ENCODE measurements at regions of chr7 and their contacts with region 1.

Region 1: DNA sequence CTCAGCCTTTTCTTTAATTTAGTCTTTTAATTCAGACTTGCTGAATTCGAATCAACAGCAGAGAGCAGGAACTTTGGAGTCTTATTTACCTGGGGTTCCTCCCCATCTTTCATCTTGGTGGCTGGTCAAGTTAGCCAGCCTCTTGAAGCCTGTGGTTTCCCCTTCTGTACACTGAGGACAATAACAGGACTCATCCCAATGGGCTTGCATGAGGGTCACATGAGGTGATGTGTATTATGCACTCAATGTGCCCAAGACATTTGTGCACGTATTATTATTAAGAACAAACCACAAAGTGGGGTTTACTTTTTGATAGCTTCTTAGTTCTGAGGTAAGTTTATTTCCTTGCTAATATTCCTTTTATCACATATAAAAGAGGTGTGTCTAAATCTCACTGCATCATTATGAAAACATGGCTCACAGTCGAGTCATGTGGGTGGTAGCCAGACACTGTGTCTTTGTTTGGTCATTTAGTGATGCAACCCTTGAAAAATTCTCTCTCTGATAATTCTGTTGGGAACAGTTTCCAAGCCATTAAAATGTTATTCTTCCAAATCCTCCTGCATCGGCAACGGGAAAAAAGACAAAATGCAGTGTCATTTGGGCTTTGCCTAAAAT is 86.5 kb upstream of the GRB10 start:
- DNase-seq: peak; percentile 87
- ATAC-seq: peak; percentile 93
- H3K4me3 ChIP-seq: peak overlapping the region; percentile 27; the same call in 1 of the 2 replicates
- H3K27ac ChIP-seq: peak overlapping the region; percentile 85
- H3K4me1 ChIP-seq: peaks cover 30% of the 10 kb centered on the region
- H3K27me3 ChIP-seq: no peaks in the 10 kb centered on the region
- CTCF ChIP-seq: no peak

Region 2: DNA sequence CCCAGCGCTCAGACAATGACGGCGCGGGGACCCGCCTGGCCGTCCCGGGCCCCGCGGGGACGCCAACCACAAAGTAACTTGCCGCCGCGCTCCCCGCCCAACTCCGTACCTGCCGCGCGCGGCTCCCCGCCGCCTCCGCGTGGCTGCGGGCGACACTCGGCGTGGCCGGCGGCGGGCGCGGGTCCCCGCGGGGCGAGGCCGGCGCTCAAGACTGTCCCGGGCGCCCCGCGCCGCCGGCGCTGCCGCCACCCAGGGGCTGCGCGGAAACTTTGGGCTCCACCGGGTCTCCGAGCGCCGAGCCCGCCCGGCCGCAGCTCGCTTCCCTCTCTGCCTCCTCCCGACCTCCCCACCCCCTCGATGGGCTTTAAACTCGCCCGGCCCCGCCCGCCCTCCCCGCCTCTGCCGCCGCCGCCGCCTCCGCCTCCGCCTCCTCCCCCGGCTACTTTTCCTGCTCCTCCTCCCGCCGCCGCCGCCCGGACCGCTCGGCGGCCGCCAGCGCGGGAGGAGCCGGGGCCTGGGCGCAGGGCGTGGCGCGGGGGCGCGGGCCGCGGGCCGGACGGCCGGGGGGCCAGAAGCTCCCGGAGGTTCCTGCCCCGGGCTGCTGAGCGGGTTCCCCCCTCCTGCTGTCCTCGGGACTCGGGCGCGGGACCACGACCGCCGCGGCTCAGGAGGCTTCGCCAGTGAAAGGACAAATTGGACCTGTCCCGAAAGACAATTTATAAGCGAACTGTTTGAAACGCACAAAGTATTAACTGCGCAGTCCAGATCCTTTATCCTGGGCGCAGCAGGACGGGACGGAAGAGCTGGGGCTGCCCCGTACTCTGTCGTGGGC is 75.9 kb before region 1 on chr7:
- CTCF ChIA-PET with region 1: no interaction called
- POLR2A ChIA-PET with region 1: no interaction called
- intact Hi-C with region 1: loop called (anchors 2 kb)
- DNase-seq: peak; percentile 61
- ATAC-seq: peak; percentile 67
- H3K4me3 ChIP-seq: peak overlapping the region; percentile 65
- H3K27ac ChIP-seq: peak overlapping the region; percentile 36; the same call in 1 of the 2 replicates
- H3K4me1 ChIP-seq: peaks cover 15% of the 10 kb centered on the region
- H3K27me3 ChIP-seq: no peaks in the 10 kb centered on the region
- CTCF ChIP-seq: no peak

Region 3: DNA sequence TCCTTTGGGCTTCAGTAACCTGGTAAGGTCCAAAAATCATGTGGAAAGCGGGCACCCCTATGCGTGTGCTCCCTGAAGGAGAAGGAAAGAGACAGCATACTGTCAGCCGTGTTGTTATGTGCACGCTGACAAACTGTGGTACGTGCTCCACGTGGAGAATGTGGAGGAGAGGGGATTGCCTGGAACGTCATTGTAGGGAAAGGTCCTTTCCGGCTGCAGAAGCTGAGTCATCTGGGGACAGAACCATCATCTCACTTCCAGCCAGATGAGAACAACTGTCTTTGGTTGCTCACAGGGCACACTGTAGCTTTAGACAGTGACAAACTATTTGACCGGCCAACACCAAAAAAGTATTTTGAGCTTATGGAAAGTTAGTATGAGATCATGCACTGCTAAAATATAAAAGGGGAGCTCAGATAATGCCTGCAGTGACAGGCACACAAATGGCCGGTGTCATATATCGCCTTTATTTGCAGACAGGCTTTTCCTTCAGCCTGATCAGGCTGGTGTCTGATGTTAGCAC is 47.7 kb before region 1 on chr7:
- CTCF ChIA-PET with region 1: no interaction called
- POLR2A ChIA-PET with region 1: no interaction called
- intact Hi-C with region 1: no loop called
- DNase-seq: peak; percentile 70
- ATAC-seq: peak; percentile 65
- H3K4me3 ChIP-seq: no peak overlapping the region
- H3K27ac ChIP-seq: peak overlapping the region; percentile 90
- H3K4me1 ChIP-seq: peaks cover 45% of the 10 kb centered on the region
- H3K27me3 ChIP-seq: no peaks in the 10 kb centered on the region
- CTCF ChIP-seq: no peak

Region 4: GRCh38 chr7:50832744-50833143 is 36.5 kb before region 1 on chr7:
- CTCF ChIA-PET with region 1: no interaction called
- POLR2A ChIA-PET with region 1: no interaction called
- intact Hi-C with region 1: loop called (anchors 1 kb)
- DNase-seq: peak; percentile 97
- ATAC-seq: peak; percentile 92
- H3K4me3 ChIP-seq: no peak overlapping the region
- H3K27ac ChIP-seq: peak overlapping the region; percentile 98
- H3K4me1 ChIP-seq: peaks cover 60% of the 10 kb centered on the region
- H3K27me3 ChIP-seq: no peaks in the 10 kb centered on the region
- CTCF ChIP-seq: no peak

Region 5: GRCh38 chr7:50848203-50848602 is 21.0 kb before region 1 on chr7:
- CTCF ChIA-PET with region 1: interaction called, 3 read pairs
- POLR2A ChIA-PET with region 1: no interaction called
- intact Hi-C with region 1: loop called (anchors 1 kb)
- DNase-seq: peak; percentile 82
- ATAC-seq: peak; percentile 90
- H3K4me3 ChIP-seq: no peak overlapping the region
- H3K27ac ChIP-seq: peak overlapping the region; percentile 83
- H3K4me1 ChIP-seq: peaks cover 38% of the 10 kb centered on the region
- H3K27me3 ChIP-seq: no peaks in the 10 kb centered on the region
- CTCF ChIP-seq: no peak

Region 6: DNA sequence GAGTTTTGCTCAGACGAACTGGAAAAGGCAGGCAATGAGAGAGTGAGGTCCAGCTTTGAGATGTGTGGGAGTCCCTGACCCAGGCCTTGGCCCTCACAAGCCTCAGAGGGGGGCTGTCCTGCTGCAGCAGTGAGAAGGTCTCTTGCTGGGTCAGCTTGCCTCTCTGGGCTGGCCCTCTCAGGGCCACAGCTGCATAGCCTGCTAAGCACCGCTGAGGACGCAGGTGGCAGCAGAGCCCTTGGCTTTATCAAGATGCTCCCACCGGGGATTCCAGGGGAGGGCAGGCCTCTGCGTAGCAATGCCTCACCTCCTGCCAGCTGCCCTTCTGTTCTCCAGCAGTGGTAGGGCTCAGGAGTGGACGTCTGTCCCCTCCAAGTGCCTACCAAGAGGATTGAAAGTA is 318.7 kb after region 1 on chr7:
- CTCF ChIA-PET with region 1: no interaction called
- POLR2A ChIA-PET with region 1: no interaction called
- intact Hi-C with region 1: no loop called
- DNase-seq: no peak
- ATAC-seq: peak; percentile 42; the same call in 1 of the 2 replicates
- H3K4me3 ChIP-seq: no peak overlapping the region
- H3K27ac ChIP-seq: no peak overlapping the region
- H3K4me1 ChIP-seq: no peaks in the 10 kb centered on the region; the same call in 1 of the 2 replicates
- H3K27me3 ChIP-seq: no peaks in the 10 kb centered on the region
- CTCF ChIP-seq: no peak